Tibial artery (tissue), 4 donors: ENCODE measurements at regions of chr11 and their contacts with region 1.

Region 1: DNA sequence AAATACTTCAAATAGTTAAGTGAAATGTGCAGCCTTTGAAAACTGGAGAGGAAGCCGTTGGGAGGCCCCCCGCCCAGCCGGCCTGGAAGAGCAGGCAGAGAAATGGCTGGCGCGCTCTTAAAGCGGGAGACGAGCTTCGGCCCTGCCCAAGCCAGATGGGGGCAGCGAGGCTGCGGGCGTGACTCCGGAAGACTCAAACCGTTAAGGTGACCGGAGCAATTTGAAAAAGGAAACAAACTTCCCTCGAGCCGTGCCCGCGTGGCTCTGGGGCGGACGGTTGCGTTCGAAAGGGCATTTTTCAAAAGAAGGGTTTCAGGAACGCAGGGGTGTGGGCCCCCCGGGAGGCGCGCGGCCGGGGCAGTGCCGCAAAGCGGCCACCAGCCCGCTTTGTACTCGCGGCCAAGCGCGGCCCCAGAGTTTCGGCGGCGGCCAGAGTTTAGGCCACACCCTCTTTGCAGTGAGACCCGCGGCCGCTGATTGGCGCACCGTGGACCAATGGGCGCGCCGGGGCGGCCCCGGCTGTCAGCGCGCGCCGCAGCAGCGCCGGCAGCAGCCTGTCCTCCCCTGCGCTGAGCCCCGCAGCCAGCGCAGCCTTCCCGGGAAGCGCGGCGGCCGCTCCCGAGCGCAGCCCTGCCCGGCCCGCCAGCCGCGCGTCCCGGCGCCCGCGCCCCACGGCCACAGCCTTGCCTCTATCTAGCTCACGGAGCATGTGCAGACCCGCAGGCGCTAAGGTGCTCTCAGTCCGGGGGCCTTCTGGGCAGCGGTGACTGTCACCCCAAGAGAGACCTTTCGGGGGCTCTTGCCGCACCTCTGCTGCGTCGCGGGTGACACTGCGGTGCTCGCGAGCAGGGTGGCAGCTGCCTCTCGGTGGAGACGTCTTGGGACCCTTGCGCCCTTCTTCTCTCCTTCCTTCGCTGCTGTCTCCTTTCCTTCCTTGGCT is at the start of gene NAV2:
- DNase-seq: peak; percentile 93 to 97
- H3K4me3 ChIP-seq: peak within 1 kb of the TSS; percentile 88 to 96
- H3K27ac ChIP-seq: peak within 1 kb of the TSS; percentile 95 to 98
- H3K4me1 ChIP-seq: peaks cover 0 to 51% (median 28%) of the 10 kb centered on the region in 4 donors
- H3K27me3 ChIP-seq: no peaks in the 10 kb centered on the region
- CTCF ChIP-seq: peak in 1 of 2 experiments; percentile 23

Region 2: GRCh38 chr11:19595840-19596751 is 116.5 kb before region 1 on chr11:
- intact Hi-C with region 1: loop called (anchors 10 kb)
- DNase-seq: peak; percentile 81 to 95
- H3K4me3 ChIP-seq: peak overlapping the region; percentile 22 to 46
- H3K27ac ChIP-seq: peak overlapping the region; percentile 78
- H3K4me1 ChIP-seq: peaks cover 0 to 66% (median 41%) of the 10 kb centered on the region in 4 donors
- H3K27me3 ChIP-seq: no peaks in the 10 kb centered on the region
- CTCF ChIP-seq: no peak

Region 3: DNA sequence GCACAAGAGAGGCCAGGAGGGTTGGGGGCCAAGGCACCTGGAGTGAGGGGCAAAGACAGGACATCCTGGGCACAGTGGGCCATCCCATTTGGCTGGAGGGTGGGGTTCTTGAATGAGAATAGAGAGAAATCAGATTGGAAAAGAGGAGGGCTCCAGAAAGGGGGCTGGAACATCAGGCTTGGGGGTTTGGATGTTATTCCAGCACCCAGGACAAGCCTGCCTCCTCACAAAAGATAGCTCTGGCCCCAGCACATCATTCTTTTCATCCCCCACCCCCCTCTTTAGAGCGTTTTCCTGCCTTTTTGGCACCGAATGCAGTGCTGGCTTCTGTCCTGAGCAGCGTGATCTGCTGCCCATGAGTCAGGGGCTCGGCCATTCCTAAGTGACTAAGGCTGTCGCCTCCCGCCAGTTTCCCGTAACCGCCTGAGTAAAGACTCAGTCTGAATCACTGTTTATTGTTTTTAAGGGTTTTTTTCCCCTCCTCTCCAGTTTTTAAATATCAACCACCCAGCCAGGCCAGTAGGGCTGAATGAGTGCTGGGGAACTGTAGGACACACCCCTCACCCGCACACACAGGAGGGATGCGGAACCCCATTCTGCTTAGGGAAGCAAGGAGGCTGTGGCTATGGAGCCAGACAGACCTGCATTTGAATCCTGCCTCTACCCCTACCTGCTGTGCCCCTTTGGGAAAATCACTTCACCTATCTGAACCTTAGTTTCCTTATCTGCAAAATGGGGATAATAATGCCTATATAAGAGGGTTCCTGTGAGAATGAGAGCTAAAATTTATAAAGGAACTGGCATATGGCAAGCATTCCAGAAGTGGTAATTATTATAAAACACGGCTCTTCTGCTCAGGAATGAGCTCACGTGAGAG is 32.4 kb before region 1 on chr11:
- intact Hi-C with region 1: loop called (anchors 2 kb)
- DNase-seq: peak; percentile 96 to 98
- H3K4me3 ChIP-seq: no peak overlapping the region
- H3K27ac ChIP-seq: peak overlapping the region; percentile 90 to 91
- H3K4me1 ChIP-seq: peaks cover 0 to 84% (median 60%) of the 10 kb centered on the region in 4 donors
- H3K27me3 ChIP-seq: no peaks in the 10 kb centered on the region
- CTCF ChIP-seq: peak; percentile 25 to 46